ENCODE measurements at regions of chr15 and their contacts with region 1.

Region 1: GRCh38 chr15:45634442-45635190 is at the start of gene SQOR:
- DNase-seq: peak; percentile 80 to 89 (median 85)
- H3K4me3 ChIP-seq: peak within 1 kb of the TSS; percentile 77 to 90 (median 88)
- H3K4me3 Mint-ChIP-seq: peak within 1 kb of the TSS; percentile 98 to 99
- H3K27ac ChIP-seq: peak within 1 kb of the TSS; percentile 85 to 94
- H3K27ac Mint-ChIP-seq: peak within 1 kb of the TSS; percentile 94 to 97 (median 96)
- H3K4me1 ChIP-seq: peaks cover 53 to 62% of the 10 kb centered on the region in 2 donors
- H3K4me1 Mint-ChIP-seq: peaks cover 57% of the 10 kb centered on the region
- H3K27me3 ChIP-seq: no peaks in the 10 kb centered on the region
- H3K27me3 Mint-ChIP-seq: peaks cover 0 to 9% (median 2%) of the 10 kb centered on the region in 3 donors
- CTCF ChIP-seq: no peak
- polyA plus RNA-seq, gene SQOR: 78.9 to 292 (median 232) TPM

Region 2: DNA sequence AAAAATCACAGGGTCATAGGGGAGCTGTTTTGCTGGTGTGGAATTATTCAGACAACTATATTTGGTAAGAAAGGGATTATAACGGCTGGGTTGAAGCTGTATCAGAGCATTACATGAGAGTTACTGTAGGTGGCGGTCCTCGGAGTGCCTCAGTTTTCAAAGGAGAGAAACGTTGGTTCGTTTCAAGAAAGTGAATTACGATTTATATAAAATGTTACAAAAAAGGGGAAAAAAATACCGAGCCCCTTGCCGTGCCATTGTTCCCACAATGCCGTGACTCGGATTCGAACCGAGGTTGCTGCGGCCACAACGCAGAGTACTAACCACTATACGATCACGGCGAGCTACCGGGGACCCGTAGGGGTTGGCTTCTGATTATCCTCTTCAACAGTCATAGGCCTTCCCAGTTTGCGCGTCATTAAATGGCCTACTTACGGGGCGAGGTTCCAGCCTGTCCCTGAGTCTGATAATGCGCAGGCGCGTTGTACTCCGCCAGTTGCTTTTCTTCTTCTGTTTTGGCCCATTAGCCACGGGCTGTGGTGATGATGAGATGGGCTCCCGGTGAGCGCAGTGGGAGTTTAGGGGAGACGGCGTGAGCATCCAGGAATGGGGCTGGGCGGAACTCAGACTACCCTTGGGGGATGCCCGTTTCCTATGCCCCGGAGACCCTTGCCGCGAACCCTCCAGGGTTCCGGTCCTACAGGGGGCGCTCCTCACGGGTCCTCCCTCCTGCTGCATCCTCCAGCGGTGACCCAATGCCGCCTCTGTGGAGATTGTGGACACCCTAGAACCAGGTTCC is 436.1 kb before region 1 on chr15:
- intact Hi-C with region 1: loop called in 1 of 2 experiments (anchors 10 kb)
- DNase-seq: peak; percentile 98 to 99 (median 98)
- H3K4me3 ChIP-seq: peak overlapping the region; percentile 68 to 95 (median 91)
- H3K4me3 Mint-ChIP-seq: peak overlapping the region in 1 of 2 donors; percentile 88
- H3K27ac ChIP-seq: peak overlapping the region; percentile 97 to 99
- H3K27ac Mint-ChIP-seq: peak overlapping the region in 1 of 7 donors; percentile 82
- H3K4me1 ChIP-seq: peaks cover 34 to 40% of the 10 kb centered on the region in 2 donors
- H3K4me1 Mint-ChIP-seq: peaks cover 28% of the 10 kb centered on the region
- H3K27me3 ChIP-seq: no peaks in the 10 kb centered on the region
- H3K27me3 Mint-ChIP-seq: peaks cover 0 to 8% (median 2%) of the 10 kb centered on the region in 3 donors
- CTCF ChIP-seq: peak; percentile 67

Region 3: DNA sequence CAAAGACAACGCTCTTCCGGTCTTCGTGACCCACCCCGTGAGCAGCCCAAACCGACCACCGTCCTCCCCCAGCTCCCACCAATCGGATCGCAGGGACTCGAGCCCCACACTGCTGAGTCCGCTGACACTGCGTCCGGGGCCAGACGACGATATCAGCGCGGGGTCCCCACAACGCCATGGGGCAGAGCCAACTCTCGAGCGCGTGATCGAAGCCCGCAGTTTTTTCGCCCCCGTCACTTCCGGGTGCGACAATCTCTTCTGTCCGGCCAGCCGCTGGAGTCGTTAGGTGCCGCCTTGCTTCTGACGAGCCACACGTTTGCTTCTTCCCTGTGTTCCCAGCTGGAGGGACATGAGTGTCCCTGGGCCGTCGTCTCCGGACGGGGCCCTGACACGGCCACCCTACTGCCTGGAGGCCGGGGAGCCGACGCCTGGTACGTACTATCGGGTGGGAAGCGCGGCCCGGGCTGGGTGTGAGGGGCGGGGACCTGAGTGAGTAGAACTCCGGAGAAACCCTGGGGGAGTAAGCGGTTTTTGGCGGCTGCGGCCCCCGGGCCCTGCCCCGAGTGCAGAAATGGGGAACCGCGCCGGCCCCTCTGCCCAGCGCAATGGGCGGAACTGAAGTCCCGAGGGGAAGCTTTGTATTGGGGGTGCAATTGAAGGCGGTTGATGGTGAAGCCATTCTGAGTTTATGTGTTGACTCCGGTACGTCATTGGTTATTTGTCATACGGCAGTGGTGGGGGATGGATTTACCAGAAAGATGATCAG is 47.3 kb before region 1 on chr15 and contains the start of gene BLOC1S6:
- intact Hi-C with region 1: loop called in 1 of 2 experiments (anchors 10 kb)
- DNase-seq: peak; percentile 92 to 95 (median 93)
- H3K4me3 ChIP-seq: peak within 1 kb of the TSS; percentile 78 to 98 (median 91)
- H3K4me3 Mint-ChIP-seq: peak within 1 kb of the TSS; percentile 90 to 99
- H3K27ac ChIP-seq: peak within 1 kb of the TSS; percentile 99 to 100
- H3K27ac Mint-ChIP-seq: peak within 1 kb of the TSS; percentile 100
- H3K4me1 ChIP-seq: peaks cover 45 to 52% of the 10 kb centered on the region in 2 donors
- H3K4me1 Mint-ChIP-seq: peaks cover 46% of the 10 kb centered on the region
- H3K27me3 ChIP-seq: no peaks in the 10 kb centered on the region
- H3K27me3 Mint-ChIP-seq: peaks cover 0 to 5% (median 0%) of the 10 kb centered on the region in 3 donors
- CTCF ChIP-seq: no peak
- polyA plus RNA-seq, gene BLOC1S6: 16.8 to 54.9 (median 47.9) TPM

Region 4: GRCh38 chr15:45653702-45654424 is 19.2 kb after region 1 on chr15:
- intact Hi-C with region 1: loop called in 1 of 2 experiments (anchors 2 kb)
- DNase-seq: peak; percentile 65 to 88 (median 77)
- H3K4me3 ChIP-seq: peak overlapping the region in 1 of 3 experiments; percentile 7
- H3K4me3 Mint-ChIP-seq: peak overlapping the region in 1 of 2 donors; percentile 66
- H3K27ac ChIP-seq: peak overlapping the region; percentile 65 to 77
- H3K27ac Mint-ChIP-seq: peak overlapping the region; percentile 76 to 93 (median 91)
- H3K4me1 ChIP-seq: peaks cover 44 to 54% of the 10 kb centered on the region in 2 donors
- H3K4me1 Mint-ChIP-seq: peaks cover 67% of the 10 kb centered on the region
- H3K27me3 ChIP-seq: no peaks in the 10 kb centered on the region
- H3K27me3 Mint-ChIP-seq: no peaks in the 10 kb centered on the region
- CTCF ChIP-seq: no peak

Measured in CD14-positive monocyte (primary cell).